Prostate gland (tissue), 2 donors: ENCODE measurements at regions of chr3 and their contacts with region 1.

Region 1: DNA sequence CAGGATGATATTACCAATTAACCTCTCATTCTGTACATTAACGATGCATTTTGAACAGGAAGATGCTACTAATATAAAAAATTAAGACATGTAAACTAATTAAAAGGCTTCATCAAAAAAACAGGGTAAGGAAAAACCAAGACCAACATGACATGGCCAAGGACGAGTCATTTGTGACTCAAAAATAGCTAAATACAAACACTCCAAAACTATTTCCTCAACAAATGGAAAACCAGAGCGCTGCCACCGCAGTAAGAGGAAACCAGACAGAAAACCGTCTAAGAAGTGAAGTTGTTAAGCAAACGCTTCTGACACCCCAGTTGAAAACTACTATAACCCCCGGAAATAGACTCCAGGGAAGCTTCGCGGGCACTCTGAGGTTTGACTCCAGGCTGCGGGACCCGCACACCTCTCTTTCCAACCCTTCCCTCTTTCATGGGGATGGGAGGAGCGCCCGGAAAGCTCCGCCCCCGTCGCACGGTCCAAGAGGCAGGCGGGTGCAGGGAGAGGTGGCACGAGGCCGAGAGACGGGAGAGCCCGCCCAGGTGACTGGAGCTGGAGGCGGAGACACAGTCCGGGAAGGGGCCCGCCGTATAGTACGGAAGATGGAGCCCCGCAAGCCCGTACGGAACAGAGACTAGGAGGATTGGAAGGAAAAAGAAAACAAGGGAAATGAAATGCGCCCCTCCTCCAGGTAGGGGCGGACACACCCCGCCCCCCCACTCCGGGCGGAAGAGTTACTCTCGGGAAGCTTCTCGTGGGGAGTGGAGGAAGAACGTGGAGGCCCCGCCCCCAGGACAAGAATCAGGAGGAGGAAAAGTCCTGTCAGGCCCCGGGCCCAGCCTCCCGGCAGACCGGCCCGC is 708 bp downstream of the DCAF1 start:
- DNase-seq: peak; percentile 96
- H3K4me3 ChIP-seq: peak overlapping the region; percentile 94 to 95
- H3K27ac ChIP-seq: peak overlapping the region; percentile 98
- H3K4me1 ChIP-seq: peaks cover 5% of the 10 kb centered on the region
- H3K27me3 ChIP-seq: no peaks in the 10 kb centered on the region
- CTCF ChIP-seq: peak in 1 of 4 experiments; percentile 3
- POLR2A ChIP-seq: peak; percentile 63

Region 2: GRCh38 chr3:51304230-51304629 is 194.9 kb before region 1 on chr3:
- intact Hi-C with region 1: no loop called
- DNase-seq: no peak
- H3K4me3 ChIP-seq: no peak overlapping the region
- H3K27ac ChIP-seq: no peak overlapping the region
- H3K4me1 ChIP-seq: no peaks in the 10 kb centered on the region
- H3K27me3 ChIP-seq: no peaks in the 10 kb centered on the region
- CTCF ChIP-seq: no peak
- POLR2A ChIP-seq: no peak

Region 3: DNA sequence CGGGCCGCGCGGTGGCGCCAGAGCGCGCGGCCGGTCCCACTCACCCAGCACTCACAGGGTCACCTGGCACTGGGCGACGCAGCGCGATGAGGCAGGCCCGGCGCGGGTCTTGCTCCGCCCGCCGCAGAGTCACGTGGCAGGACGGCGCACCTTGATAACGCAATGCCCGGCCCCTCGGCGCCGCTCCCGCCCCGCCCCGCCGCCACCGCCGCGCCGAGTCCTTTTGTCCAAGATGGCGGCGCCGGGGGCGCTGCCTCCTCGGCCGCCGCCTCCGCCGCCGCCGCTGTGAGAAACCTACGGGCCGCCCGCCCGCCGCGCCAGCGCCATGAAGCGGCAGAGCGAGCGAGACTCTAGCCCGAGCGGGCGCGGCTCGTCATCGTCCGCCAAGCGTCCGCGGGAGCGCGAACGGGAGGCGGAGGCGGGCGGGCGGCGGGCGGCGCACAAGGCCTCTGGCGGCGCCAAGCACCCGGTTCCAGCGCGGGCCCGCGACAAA is 108.0 kb before region 1 on chr3 and contains the start of gene RBM15B:
- intact Hi-C with region 1: loop called (anchors 5 kb)
- DNase-seq: peak; percentile 97
- H3K4me3 ChIP-seq: peak within 1 kb of the TSS; percentile 74 to 88
- H3K27ac ChIP-seq: peak within 1 kb of the TSS; percentile 67 to 90
- H3K4me1 ChIP-seq: peaks cover 38% of the 10 kb centered on the region
- H3K27me3 ChIP-seq: no peaks in the 10 kb centered on the region
- CTCF ChIP-seq: peak in 3 of 4 experiments; percentile 90 to 99 (median 97)
- POLR2A ChIP-seq: peak; percentile 58
- total RNA-seq, gene RBM15B: 34.1 to 40.1 TPM

Region 4: DNA sequence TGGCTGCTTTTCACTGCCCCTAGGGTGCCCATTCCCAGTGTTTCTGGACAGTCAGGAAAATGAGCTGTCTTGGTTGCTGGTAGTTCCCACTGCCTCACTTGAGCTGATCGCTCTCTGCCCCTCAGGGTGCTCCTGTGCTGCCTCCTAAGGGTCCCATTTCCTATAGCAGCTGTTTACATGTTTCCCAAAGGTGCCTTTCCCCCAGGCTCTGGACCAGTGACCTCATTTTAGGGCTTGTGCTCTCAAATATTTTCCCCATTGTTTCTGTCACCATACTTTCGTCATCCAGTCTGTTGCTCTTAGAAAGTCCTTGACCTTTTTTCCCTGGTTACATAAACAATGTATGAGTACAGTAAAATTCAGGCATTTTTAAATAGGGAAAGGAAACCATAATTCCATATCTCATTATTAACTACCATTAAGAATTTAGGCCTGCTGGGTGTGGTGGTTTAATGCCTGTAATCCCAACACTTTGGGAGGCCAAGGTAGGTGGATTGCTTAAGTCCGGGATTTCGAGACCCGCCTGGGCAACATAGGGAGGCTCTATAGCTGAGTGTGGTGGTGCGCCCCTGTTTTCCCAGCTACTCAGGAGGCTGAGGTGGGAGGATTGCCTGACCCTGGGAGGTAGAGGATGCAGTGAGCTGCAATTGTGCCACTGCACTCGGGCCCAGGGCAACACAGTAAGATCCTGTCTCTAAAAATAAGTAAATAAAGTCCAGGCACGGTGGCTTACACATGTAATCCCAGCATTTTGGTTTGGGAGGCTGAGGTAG is 51.1 kb after region 1 on chr3:
- intact Hi-C with region 1: no loop called
- DNase-seq: no peak
- H3K4me3 ChIP-seq: no peak overlapping the region
- H3K27ac ChIP-seq: no peak overlapping the region
- H3K4me1 ChIP-seq: no peaks in the 10 kb centered on the region
- H3K27me3 ChIP-seq: no peaks in the 10 kb centered on the region
- CTCF ChIP-seq: no peak
- POLR2A ChIP-seq: no peak

Region 5: DNA sequence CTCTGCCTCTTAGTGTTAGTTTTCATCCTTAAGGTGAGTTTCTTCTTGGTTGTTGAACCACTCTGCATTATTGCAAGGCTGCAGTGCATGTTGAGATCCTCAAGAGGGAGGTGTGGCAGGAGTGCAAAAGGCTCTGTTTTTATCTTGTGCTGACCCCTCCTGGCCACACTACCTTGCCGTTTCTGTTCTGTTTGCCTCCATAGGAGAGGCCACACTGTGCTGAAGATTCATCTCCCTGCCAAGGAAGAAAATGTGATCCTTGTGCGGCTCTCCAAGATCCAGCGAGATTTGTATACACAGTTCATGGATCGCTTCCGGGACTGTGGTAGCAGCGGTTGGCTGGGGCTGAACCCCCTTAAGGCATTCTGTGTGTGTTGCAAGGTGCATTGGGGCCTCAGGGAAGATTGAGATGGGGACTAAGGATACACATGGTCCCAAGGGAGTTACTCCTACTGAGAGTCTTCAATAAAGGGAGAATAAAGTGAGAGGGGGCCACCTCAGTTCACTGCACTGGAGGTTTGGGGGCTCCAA is 138.9 kb after region 1 on chr3:
- intact Hi-C with region 1: loop called (anchors 2 kb)
- DNase-seq: peak; percentile 70
- H3K4me3 ChIP-seq: no peak overlapping the region
- H3K27ac ChIP-seq: peak overlapping the region; percentile 43 to 68
- H3K4me1 ChIP-seq: no peaks in the 10 kb centered on the region
- H3K27me3 ChIP-seq: no peaks in the 10 kb centered on the region
- CTCF ChIP-seq: peak; percentile 44 to 92 (median 82)
- POLR2A ChIP-seq: no peak

Region 6: DNA sequence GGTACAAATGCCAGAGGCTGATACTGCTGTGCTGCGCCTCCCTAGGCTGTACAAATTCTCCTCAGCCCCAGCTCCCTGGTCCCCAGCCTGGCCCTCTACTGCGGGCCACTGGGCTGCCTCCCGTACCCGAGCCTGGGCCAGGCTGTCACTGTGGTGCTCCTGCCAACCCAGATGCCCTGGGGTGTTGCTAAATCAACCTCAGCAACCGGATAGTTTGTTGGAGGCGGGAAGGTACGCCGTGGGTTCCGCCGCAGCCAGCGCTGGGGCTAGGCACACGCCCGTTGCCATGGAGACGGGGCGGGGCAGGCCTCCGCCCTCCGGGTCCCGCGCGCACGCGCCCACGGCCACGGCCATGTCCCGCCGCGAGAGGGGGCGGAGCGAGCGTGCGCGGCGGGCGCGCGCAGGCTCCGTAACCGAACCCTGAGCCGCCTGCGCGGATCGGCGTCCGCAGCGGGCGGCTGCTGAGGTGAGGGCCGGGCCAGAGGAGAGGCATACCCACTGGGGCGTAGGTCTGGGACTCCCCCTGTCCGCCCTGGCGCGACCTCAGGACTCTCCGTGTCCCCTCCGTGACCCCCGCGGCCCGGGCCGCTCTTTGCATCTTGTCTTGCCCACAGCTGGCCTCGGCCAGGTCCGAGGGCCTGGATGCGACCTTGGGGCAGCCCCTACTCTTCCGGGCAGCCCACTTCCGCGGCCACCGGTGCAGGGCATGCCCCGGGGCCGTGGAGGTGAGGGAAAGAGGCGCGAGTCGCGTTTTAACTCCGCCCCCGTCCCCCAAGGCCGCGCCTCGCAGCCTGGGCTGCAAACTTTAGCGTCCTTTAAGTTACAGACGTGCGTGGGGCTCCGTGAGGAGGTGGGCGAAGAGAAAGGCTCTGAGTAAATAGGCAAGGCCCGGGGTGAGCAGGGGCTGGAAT is 172.0 kb after region 1 on chr3 and contains the start of gene TEX264:
- intact Hi-C with region 1: loop called (anchors 2 kb)
- DNase-seq: peak; percentile 92
- H3K4me3 ChIP-seq: peak within 1 kb of the TSS; percentile 78 to 94
- H3K27ac ChIP-seq: peak within 1 kb of the TSS; percentile 82 to 92
- H3K4me1 ChIP-seq: peaks cover 20% of the 10 kb centered on the region
- H3K27me3 ChIP-seq: no peaks in the 10 kb centered on the region
- CTCF ChIP-seq: peak in 2 of 4 experiments; percentile 21 to 30
- POLR2A ChIP-seq: peak; percentile 74
- total RNA-seq, gene TEX264: 157 to 214 TPM

Region 7: GRCh38 chr3:51799879-51800749 is 301.0 kb after region 1 on chr3:
- intact Hi-C with region 1: loop called (anchors 2 kb)
- DNase-seq: peak; percentile 11
- H3K4me3 ChIP-seq: no peak overlapping the region
- H3K27ac ChIP-seq: no peak overlapping the region
- H3K4me1 ChIP-seq: no peaks in the 10 kb centered on the region
- H3K27me3 ChIP-seq: no peaks in the 10 kb centered on the region
- CTCF ChIP-seq: peak; percentile 17 to 78 (median 60)
- POLR2A ChIP-seq: no peak